ENCODE measurements at regions of chr12 and their contacts with region 1.

Region 1: GRCh38 chr12:47021298-47021697 is 58.1 kb upstream of the PCED1B start:
- DNase-seq: peak; percentile 28 to 72
- H3K4me3 ChIP-seq: no peak overlapping the region
- H3K27ac ChIP-seq: no peak overlapping the region
- H3K4me1 ChIP-seq: peaks cover 30% of the 10 kb centered on the region
- H3K27me3 ChIP-seq: no peaks in the 10 kb centered on the region
- CTCF ChIP-seq: peak; percentile 82

Region 2: DNA sequence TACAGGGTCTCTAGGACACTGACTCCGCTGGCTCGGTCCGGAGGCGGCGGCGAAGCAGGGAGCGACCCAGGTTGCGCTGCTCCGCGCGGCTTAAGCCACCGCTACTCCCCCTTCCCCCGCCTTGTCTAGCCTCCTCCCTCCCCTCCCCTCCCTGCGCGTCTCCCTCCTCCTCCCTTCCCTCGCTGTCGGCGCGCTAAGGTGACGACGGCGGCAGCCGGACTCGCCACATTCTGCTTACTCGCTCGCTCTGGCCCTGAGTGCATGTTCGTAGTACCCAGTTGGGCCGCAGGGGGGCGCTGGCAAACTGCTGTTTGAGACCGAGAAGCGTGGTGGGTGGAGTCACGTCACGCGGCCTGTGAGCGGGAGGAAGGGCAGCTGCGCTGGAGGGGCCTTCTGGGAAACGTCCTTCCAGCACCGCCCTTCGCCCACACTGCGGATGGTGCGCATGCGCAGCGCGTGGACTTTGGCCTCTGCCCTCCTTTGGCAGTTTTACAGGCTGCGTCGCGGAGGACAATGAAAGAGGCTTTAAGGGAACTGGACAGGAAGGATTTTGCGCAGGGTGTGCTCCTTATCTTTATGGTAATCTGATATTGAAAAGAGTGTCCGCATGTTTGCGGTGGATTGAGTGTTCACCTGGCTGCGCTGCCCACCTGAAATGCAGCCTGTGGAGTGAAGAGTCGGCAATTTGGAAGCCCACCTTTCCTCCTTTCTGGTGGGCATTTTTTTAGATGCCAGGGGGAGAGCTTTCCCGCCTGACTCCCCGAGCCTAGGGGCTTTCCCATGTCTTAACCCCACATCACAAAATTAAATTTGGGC is 1030.6 kb before region 1 on chr12 and contains the start of gene SCAF11:
- CTCF ChIA-PET with region 1: no interaction called
- POLR2A ChIA-PET with region 1: no interaction called
- intact Hi-C with region 1: loop called (anchors 2 kb)
- DNase-seq: peak; percentile 98 to 100
- H3K4me3 ChIP-seq: peak within 1 kb of the TSS; percentile 94
- H3K27ac ChIP-seq: peak within 1 kb of the TSS; percentile 94
- H3K4me1 ChIP-seq: peaks cover 36% of the 10 kb centered on the region
- H3K27me3 ChIP-seq: no peaks in the 10 kb centered on the region
- CTCF ChIP-seq: peak; percentile 92
- total RNA-seq, gene SCAF11: 95.5 and 98.7 TPM in 2 replicates

Region 3: GRCh38 chr12:46268590-46269558 is 752.4 kb before region 1 on chr12 and contains the start of gene SLC38A1:
- CTCF ChIA-PET with region 1: no interaction called
- POLR2A ChIA-PET with region 1: no interaction called
- intact Hi-C with region 1: loop called (anchors 1 kb)
- DNase-seq: peak; percentile 89 to 90
- H3K4me3 ChIP-seq: peak within 1 kb of the TSS; percentile 89
- H3K27ac ChIP-seq: peak within 1 kb of the TSS; percentile 98
- H3K4me1 ChIP-seq: peaks cover 34% of the 10 kb centered on the region
- H3K27me3 ChIP-seq: no peaks in the 10 kb centered on the region
- CTCF ChIP-seq: no peak
- total RNA-seq, gene SLC38A1: 77.7 and 131 TPM in 2 replicates

Region 4: GRCh38 chr12:46546634-46547286 is 474.5 kb before region 1 on chr12:
- CTCF ChIA-PET with region 1: no interaction called
- POLR2A ChIA-PET with region 1: no interaction called
- intact Hi-C with region 1: loop called (anchors 5 kb)
- DNase-seq: peak in 1 of 2 experiments; percentile 62
- H3K4me3 ChIP-seq: no peak overlapping the region
- H3K27ac ChIP-seq: peak overlapping the region; percentile 88
- H3K4me1 ChIP-seq: peaks cover 33% of the 10 kb centered on the region
- H3K27me3 ChIP-seq: no peaks in the 10 kb centered on the region
- CTCF ChIP-seq: no peak

Region 5: DNA sequence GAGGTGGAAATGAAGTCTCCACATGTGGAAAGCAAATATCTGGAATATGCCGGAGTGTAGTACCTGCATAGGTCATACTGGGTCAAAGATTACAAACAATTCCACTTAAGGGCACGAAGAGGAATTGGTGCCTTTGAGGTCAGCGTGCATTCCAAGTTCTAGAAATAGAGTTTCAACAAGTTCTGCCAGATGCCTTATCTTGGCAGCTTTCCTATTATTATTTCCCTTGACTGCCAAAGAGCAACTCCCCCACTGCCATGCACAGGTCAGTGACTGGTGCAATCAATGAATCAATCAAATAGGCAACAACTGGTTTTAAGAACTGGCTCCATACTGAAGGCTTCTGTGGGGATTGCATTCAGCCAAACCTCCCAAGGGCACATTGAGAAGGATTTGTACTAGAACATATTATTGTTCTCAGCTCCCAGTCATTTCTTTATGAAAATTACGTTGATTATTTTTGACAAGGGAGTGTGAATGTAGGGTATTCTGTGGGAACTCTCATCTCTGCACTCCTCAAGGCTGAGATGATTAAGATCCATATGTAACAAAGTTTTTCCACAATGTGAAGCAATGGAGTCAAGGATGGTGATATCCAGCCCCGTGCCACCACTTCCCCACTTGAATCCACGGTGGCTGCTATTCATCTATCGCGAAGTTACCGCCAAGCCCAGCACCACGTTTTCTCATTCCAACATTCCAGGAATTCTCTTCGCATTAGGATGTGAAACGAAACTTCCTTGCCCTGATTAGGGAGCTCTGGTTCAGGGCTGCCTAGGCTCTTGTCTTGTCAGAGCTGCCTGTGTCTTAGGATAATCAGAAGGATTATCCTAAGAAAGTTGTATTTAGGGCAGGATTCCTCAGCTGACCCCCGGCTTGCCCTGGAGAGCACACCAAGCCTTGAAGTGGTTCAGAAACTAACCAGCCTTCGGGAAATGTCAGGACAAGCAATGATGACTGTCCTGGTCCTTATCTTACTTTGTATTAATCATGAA is 57.0 kb before region 1 on chr12:
- CTCF ChIA-PET with region 1: no interaction called
- POLR2A ChIA-PET with region 1: no interaction called
- intact Hi-C with region 1: loop called (anchors 1 kb)
- DNase-seq: peak; percentile 66 to 93
- H3K4me3 ChIP-seq: no peak overlapping the region
- H3K27ac ChIP-seq: peak overlapping the region; percentile 60
- H3K4me1 ChIP-seq: peaks cover 43% of the 10 kb centered on the region
- H3K27me3 ChIP-seq: no peaks in the 10 kb centered on the region
- CTCF ChIP-seq: no peak

Region 6: GRCh38 chr12:47079468-47079980 is 58.2 kb after region 1 on chr12 and contains the starts of genes AMIGO2 and PCED1B:
- CTCF ChIA-PET with region 1: no interaction called
- POLR2A ChIA-PET with region 1: interaction called, 10 read pairs
- intact Hi-C with region 1: no loop called
- DNase-seq: peak; percentile 46 to 58
- H3K4me3 ChIP-seq: peak within 1 kb of the TSS; percentile 96
- H3K27ac ChIP-seq: peak within 1 kb of the TSS; percentile 98
- H3K4me1 ChIP-seq: peaks cover 50% of the 10 kb centered on the region
- H3K27me3 ChIP-seq: no peaks in the 10 kb centered on the region
- CTCF ChIP-seq: peak; percentile 26; the same call in 1 of the 2 replicates
- total RNA-seq, gene AMIGO2: 41.9 and 46.3 TPM in 2 replicates
- total RNA-seq, gene PCED1B: 10.9 and 11.2 TPM in 2 replicates